ENCODE measurements at regions of chr5 and their contacts with region 1.

Region 1: DNA sequence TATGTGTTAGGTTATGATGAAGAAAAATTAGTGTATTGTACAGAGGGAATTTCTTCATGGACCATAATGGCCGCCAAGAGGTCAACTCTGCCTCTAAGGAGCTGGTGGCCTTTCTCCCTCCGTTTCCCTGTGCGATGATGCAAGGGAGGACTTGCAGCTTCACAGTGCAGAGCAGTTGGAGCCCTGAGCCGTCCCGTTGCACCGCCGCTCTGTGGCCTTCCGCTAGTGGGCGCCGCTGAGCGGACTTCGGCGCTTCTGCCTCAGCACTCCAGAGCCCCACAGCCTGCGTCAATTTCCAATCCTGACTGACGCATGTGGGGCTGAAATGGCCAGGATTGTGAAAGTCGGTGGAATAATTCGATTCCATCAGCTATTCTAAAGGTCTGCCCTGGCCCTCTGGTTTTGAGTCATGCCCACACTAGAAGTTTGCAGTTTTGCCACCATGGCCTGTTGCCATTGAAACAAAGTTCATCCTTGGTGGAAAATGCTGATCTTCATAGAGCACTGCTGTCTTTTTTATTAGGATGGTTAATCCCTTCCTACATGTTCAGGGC is 22.7 kb upstream of the LECT2 start:
- DNase-seq: peak; percentile 80 to 91 (median 84)
- H3K4me3 ChIP-seq: no peak overlapping the region
- H3K4me3 Mint-ChIP-seq: peak overlapping the region in 1 of 2 donors; percentile 46
- H3K27ac ChIP-seq: no peak overlapping the region
- H3K27ac Mint-ChIP-seq: peak overlapping the region in 2 of 7 donors; percentile 13 to 58
- H3K4me1 ChIP-seq: peaks cover 4 to 8% of the 10 kb centered on the region in 2 donors
- H3K4me1 Mint-ChIP-seq: peaks cover 8% of the 10 kb centered on the region
- H3K27me3 ChIP-seq: peaks cover 33% of the 10 kb centered on the region in 2 donors
- H3K27me3 Mint-ChIP-seq: peaks cover 14 to 38% (median 19%) of the 10 kb centered on the region in 3 donors
- CTCF ChIP-seq: peak; percentile 95

Region 2: GRCh38 chr5:135930029-135930948 is 47.2 kb before region 1 on chr5:
- intact Hi-C with region 1: no loop called
- DNase-seq: no peak
- H3K4me3 ChIP-seq: no peak overlapping the region
- H3K4me3 Mint-ChIP-seq: peak overlapping the region in 1 of 2 donors; percentile 75
- H3K27ac ChIP-seq: no peak overlapping the region
- H3K27ac Mint-ChIP-seq: no peak overlapping the region
- H3K4me1 ChIP-seq: no peaks in the 10 kb centered on the region
- H3K4me1 Mint-ChIP-seq: no peaks in the 10 kb centered on the region
- H3K27me3 ChIP-seq: peaks cover 67 to 85% of the 10 kb centered on the region in 2 donors
- H3K27me3 Mint-ChIP-seq: peaks cover 60 to 77% (median 62%) of the 10 kb centered on the region in 3 donors
- CTCF ChIP-seq: no peak

Region 3: DNA sequence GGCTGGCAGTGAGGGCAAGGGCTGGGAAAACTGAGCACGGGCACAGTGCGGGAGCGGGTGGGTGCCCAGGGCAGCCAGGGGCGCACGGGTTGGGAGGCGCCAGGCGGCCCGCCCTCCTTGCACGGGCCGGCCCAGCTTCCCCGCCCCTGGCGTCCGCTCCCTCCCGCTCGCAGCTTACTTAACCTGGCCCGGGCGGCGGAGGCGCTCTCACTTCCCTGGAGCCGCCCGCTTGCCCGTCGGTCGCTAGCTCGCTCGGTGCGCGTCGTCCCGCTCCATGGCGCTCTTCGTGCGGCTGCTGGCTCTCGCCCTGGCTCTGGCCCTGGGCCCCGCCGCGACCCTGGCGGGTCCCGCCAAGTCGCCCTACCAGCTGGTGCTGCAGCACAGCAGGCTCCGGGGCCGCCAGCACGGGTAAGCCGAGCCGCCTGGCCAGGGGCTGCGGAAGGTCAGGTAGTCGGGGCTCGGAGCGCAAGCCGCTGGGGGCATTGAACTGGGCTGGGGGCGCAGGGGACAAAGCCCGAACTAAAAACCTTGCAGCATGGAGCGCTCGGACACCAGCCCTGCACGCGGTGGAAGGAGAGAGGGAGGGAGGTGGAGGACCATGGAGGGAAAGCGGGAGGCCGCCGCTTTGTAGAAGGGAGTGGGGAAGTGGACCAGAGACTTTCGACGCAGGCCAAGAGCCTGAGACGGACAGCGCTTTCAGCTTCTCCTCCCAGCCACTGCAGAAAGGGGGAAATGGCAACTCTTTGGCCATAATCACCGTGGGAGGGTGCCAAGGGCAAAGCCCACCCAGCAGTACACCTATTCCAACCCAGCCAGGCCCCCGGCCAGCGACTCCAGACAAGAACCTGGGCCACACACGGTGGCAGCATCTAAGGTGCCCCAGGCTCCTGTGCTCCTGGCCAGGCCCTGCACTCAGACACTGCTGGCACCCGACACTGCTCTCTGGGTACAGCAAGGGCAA is 51.6 kb after region 1 on chr5 and contains the start of gene TGFBI:
- intact Hi-C with region 1: loop called (anchors 5 to 10 kb)
- DNase-seq: peak; percentile 63 to 71 (median 69)
- H3K4me3 ChIP-seq: peak within 1 kb of the TSS; percentile 78 to 90 (median 84)
- H3K4me3 Mint-ChIP-seq: peak within 1 kb of the TSS; percentile 90 to 97
- H3K27ac ChIP-seq: peak within 1 kb of the TSS; percentile 66 to 80
- H3K27ac Mint-ChIP-seq: peak within 1 kb of the TSS; percentile 75 to 94 (median 84)
- H3K4me1 ChIP-seq: peaks cover 66 to 77% of the 10 kb centered on the region in 2 donors
- H3K4me1 Mint-ChIP-seq: peaks cover 82% of the 10 kb centered on the region
- H3K27me3 ChIP-seq: no peaks in the 10 kb centered on the region
- H3K27me3 Mint-ChIP-seq: peaks cover 5 to 13% (median 10%) of the 10 kb centered on the region in 3 donors
- CTCF ChIP-seq: no peak
- polyA plus RNA-seq, gene TGFBI: 480 to 653 (median 565) TPM

Region 4: GRCh38 chr5:136042665-136043121 is 65.2 kb after region 1 on chr5:
- intact Hi-C with region 1: loop called in 1 of 2 experiments (anchors 5 kb)
- DNase-seq: no peak
- H3K4me3 ChIP-seq: no peak overlapping the region
- H3K4me3 Mint-ChIP-seq: peak overlapping the region in 1 of 2 donors; percentile 21
- H3K27ac ChIP-seq: peak overlapping the region in 1 of 2 donors; percentile 47
- H3K27ac Mint-ChIP-seq: peak overlapping the region in 6 of 7 donors; percentile 33 to 84 (median 56)
- H3K4me1 ChIP-seq: peaks cover 27 to 46% of the 10 kb centered on the region in 2 donors
- H3K4me1 Mint-ChIP-seq: peaks cover 45% of the 10 kb centered on the region
- H3K27me3 ChIP-seq: no peaks in the 10 kb centered on the region
- H3K27me3 Mint-ChIP-seq: peaks cover 4 to 7% (median 4%) of the 10 kb centered on the region in 3 donors
- CTCF ChIP-seq: no peak

Region 5: GRCh38 chr5:136062366-136063274 is 85.2 kb after region 1 on chr5:
- intact Hi-C with region 1: loop called in 1 of 2 experiments (anchors 5 kb)
- DNase-seq: peak; percentile 11 to 33 (median 18)
- H3K4me3 ChIP-seq: no peak overlapping the region
- H3K4me3 Mint-ChIP-seq: no peak overlapping the region
- H3K27ac ChIP-seq: no peak overlapping the region
- H3K27ac Mint-ChIP-seq: peak overlapping the region in 1 of 7 donors; percentile 57
- H3K4me1 ChIP-seq: no peaks in the 10 kb centered on the region
- H3K4me1 Mint-ChIP-seq: peaks cover 2% of the 10 kb centered on the region
- H3K27me3 ChIP-seq: no peaks in the 10 kb centered on the region
- H3K27me3 Mint-ChIP-seq: peaks cover 3 to 4% (median 3%) of the 10 kb centered on the region in 3 donors
- CTCF ChIP-seq: peak; percentile 52

Region 6: GRCh38 chr5:136080483-136081216 is 103.2 kb after region 1 on chr5:
- intact Hi-C with region 1: loop called (anchors 5 to 10 kb)
- DNase-seq: peak; percentile 71 to 74 (median 71)
- H3K4me3 ChIP-seq: peak overlapping the region in 2 of 3 experiments; percentile 8 to 51
- H3K4me3 Mint-ChIP-seq: peak overlapping the region; percentile 65 to 93
- H3K27ac ChIP-seq: no peak overlapping the region
- H3K27ac Mint-ChIP-seq: peak overlapping the region in 5 of 7 donors; percentile 6 to 74 (median 28)
- H3K4me1 ChIP-seq: peaks cover 13 to 17% of the 10 kb centered on the region in 2 donors
- H3K4me1 Mint-ChIP-seq: peaks cover 11% of the 10 kb centered on the region
- H3K27me3 ChIP-seq: peaks cover 30 to 60% of the 10 kb centered on the region in 2 donors
- H3K27me3 Mint-ChIP-seq: peaks cover 40 to 56% (median 40%) of the 10 kb centered on the region in 3 donors
- CTCF ChIP-seq: no peak